HCT116 (cell line): ENCODE measurements at regions of chr9 and their contacts with region 1.

Region 1: DNA sequence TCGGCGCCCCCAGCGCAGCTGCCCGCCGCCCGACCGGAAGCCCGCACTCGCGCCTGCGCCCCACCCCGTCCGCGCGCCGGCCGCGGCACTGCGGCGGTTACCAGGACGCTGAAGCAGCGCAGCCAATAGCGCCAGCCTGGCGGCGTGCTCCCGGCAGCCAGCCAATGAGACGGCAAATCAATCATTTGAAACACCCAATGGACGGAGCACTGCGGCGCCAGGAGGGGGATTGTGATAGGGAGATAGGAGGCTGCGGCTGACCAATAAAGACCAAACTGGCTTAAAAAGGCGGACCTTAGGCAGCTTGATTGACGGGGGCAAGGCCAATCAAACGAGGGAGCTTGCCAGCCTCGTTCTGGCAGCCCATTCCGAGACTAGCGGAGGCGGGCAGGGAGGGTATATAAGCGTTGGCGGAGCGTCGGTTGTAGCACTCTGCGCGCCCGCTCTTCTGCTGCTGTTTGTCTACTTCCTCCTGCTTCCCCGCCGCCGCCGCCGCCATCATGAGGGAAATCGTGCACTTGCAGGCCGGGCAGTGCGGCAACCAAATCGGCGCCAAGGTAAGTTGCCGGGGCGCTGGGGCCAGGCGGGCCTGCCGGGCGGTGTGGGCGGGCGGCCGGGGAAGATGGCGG is at the start of gene TUBB4B:
- DNase-seq: peak; percentile 100
- ATAC-seq: peak; percentile 75
- H3K4me3 ChIP-seq: peak within 1 kb of the TSS; percentile 85 to 96
- H3K27ac ChIP-seq: peak within 1 kb of the TSS; percentile 100
- H3K4me1 ChIP-seq: peaks cover 31 to 61% of the 10 kb centered on the region in 2 experiments
- H3K27me3 ChIP-seq: no peaks in the 10 kb centered on the region
- CTCF ChIP-seq: no peak
- POLR2A ChIP-seq: peak; percentile 98
- RAD21 ChIP-seq: no peak
- total RNA-seq, gene TUBB4B: 502 TPM

Region 2: GRCh38 chr9:136978073-136978864 is 262.7 kb before region 1 on chr9:
- CTCF ChIA-PET with region 1: no interaction called
- POLR2A ChIA-PET with region 1: no interaction called
- RAD21 ChIA-PET with region 1: no interaction called
- intact Hi-C with region 1: no loop called
- DNase-seq: no peak
- ATAC-seq: peak; percentile 63
- H3K4me3 ChIP-seq: peak overlapping the region; percentile 24 to 46; a peak in 3 of 4 replicates
- H3K27ac ChIP-seq: peak overlapping the region; percentile 51; the same call in 1 of the 2 replicates
- H3K4me1 ChIP-seq: peaks cover 2 to 32% of the 10 kb centered on the region in 2 experiments; a peak in 3 of 4 replicates
- H3K27me3 ChIP-seq: no peaks in the 10 kb centered on the region
- CTCF ChIP-seq: no peak
- POLR2A ChIP-seq: no peak
- RAD21 ChIP-seq: no peak

Region 3: GRCh38 chr9:137129456-137130175 is 111.4 kb before region 1 on chr9:
- CTCF ChIA-PET with region 1: interaction called, 21 read pairs
- POLR2A ChIA-PET with region 1: interaction called, 5 read pairs
- RAD21 ChIA-PET with region 1: interaction called in 1 of 2 experiments, 3 read pairs
- intact Hi-C with region 1: no loop called
- DNase-seq: peak; percentile 81
- ATAC-seq: peak; percentile 97
- H3K4me3 ChIP-seq: peak overlapping the region; percentile 85 to 94
- H3K27ac ChIP-seq: peak overlapping the region; percentile 89
- H3K4me1 ChIP-seq: peaks cover 22 to 37% of the 10 kb centered on the region in 2 experiments
- H3K27me3 ChIP-seq: no peaks in the 10 kb centered on the region
- CTCF ChIP-seq: no peak
- POLR2A ChIP-seq: peak; percentile 67
- RAD21 ChIP-seq: no peak

Region 4: GRCh38 chr9:137162505-137163100 is 78.4 kb before region 1 on chr9:
- CTCF ChIA-PET with region 1: interaction called, 9 read pairs
- POLR2A ChIA-PET with region 1: interaction called, 12 read pairs
- RAD21 ChIA-PET with region 1: no interaction called
- intact Hi-C with region 1: no loop called
- DNase-seq: no peak
- ATAC-seq: peak; percentile 50
- H3K4me3 ChIP-seq: peak overlapping the region; percentile 59 to 70
- H3K27ac ChIP-seq: peak overlapping the region; percentile 82
- H3K4me1 ChIP-seq: peaks cover 8 to 52% of the 10 kb centered on the region in 2 experiments; a peak in 3 of 4 replicates
- H3K27me3 ChIP-seq: no peaks in the 10 kb centered on the region
- CTCF ChIP-seq: no peak; a peak in 1 of 6 replicates
- POLR2A ChIP-seq: no peak
- RAD21 ChIP-seq: no peak

Region 5: GRCh38 chr9:137200311-137201204 is 40.4 kb before region 1 on chr9 and contains the start of gene TPRN:
- CTCF ChIA-PET with region 1: interaction called, 6 read pairs
- POLR2A ChIA-PET with region 1: interaction called, 6 read pairs
- RAD21 ChIA-PET with region 1: no interaction called
- intact Hi-C with region 1: loop called (anchors 1 kb)
- DNase-seq: peak; percentile 96
- ATAC-seq: peak; percentile 93
- H3K4me3 ChIP-seq: peak within 1 kb of the TSS; percentile 61 to 81
- H3K27ac ChIP-seq: peak within 1 kb of the TSS; percentile 85
- H3K4me1 ChIP-seq: peaks cover 32 to 54% of the 10 kb centered on the region in 2 experiments
- H3K27me3 ChIP-seq: no peaks in the 10 kb centered on the region
- CTCF ChIP-seq: no peak
- POLR2A ChIP-seq: peak; percentile 95
- RAD21 ChIP-seq: no peak
- total RNA-seq, gene TPRN: 24.9 TPM

Region 6: DNA sequence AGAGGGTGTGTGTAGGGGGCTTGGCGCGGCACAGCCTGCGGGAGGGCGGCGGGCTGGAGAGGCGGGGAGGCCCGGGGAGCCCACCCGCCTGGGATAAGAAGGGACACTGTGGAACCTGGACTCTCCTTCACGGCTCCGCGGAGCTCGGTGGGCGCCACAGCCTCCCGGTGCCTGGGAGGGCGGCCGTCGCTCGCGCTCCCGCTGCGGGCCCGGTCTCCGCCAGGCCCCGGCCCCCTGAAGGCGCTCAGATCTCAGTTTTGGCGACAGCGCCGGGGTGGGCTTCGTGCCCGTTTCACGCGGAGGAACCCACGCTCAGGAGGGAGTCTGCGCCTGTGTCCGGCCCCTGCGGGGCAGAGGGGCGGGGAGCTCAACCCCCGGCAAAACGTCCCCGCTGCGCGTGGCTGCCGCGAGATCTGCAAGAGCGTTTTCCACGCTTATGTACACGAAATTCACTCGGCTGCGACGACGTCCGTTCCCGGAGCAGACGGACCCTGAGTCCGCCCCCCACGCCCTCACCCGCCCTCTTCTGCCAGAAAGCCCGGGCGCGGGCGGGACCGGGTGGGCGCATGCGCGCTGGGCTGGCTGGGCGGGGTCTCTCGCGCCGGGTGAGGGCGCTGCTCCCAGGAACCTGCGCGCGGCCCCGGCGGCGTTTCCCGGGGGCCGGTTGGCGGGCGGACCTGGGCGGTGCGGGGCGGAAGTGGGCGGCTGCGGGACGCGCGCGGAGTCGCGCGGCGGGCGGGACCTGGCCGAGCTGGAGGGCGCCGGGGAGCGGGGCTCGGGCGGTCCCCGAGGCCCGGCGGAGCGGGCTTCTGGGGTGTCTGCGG is 13.9 kb after region 1 on chr9 and contains the start of gene NELFB:
- CTCF ChIA-PET with region 1: interaction called, 11 read pairs
- POLR2A ChIA-PET with region 1: interaction called, 39 read pairs
- RAD21 ChIA-PET with region 1: no interaction called
- intact Hi-C with region 1: loop called (anchors 1 kb)
- DNase-seq: no peak
- ATAC-seq: peak; percentile 86
- H3K4me3 ChIP-seq: peak within 1 kb of the TSS; percentile 97 to 100
- H3K27ac ChIP-seq: peak within 1 kb of the TSS; percentile 91
- H3K4me1 ChIP-seq: peaks cover 21 to 42% of the 10 kb centered on the region in 2 experiments
- H3K27me3 ChIP-seq: no peaks in the 10 kb centered on the region
- CTCF ChIP-seq: no peak
- POLR2A ChIP-seq: peak; percentile 50
- RAD21 ChIP-seq: no peak
- total RNA-seq, gene NELFB: 86.4 TPM